ENCODE measurements at regions of chr19 and their contacts with region 1.

Region 1: GRCh38 chr19:796692-797527 is at the start of gene PTBP1:
- DNase-seq: peak; percentile 100
- H3K4me3 Mint-ChIP-seq: peak within 1 kb of the TSS; percentile 91
- H3K27ac Mint-ChIP-seq: peak within 1 kb of the TSS; percentile 90
- H3K4me1 Mint-ChIP-seq: peaks cover 25% of the 10 kb centered on the region
- H3K27me3 Mint-ChIP-seq: no peaks in the 10 kb centered on the region
- CTCF ChIP-seq: no peak
- total RNA-seq, gene PTBP1: 348 and 431 TPM in 2 replicates

Region 2: DNA sequence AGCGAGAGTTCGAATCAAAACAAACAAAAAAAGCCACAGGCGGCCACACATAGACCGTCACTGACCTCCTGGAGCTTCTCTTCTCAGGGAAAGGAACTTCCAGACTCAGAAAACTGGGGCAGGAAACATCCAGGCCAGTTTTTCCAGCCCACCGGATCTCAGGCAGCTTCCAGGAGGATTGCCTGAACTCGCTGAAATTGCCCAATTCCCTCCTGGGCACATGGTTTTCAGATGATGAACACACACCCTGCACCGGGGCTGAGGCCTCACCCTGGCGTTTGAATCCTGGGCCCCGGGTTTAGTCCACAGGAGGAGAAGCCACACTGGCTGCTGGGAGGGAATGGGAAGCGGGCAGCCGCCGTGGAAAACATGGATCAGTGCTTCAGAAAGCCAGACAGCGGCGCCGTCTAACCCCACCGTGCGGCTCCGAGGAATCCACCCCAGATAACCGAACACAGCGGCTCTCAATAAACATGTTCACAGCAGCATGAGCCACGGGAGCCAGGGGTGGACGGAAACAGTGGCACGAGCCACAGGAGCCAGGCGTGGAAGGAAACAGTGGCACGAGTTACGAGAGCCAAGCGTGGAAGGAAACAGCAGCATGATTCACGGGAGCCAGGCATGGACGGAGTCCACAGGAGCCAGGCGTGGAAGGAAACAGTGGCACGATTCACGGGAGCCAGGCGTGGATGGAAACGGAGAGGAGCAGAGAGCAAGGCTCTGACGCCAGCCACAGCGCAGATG is 17.8 kb before region 1 on chr19:
- CTCF ChIA-PET with region 1: interaction called, 5 read pairs
- POLR2A ChIA-PET with region 1: interaction called, 16 read pairs
- intact Hi-C with region 1: loop called (anchors 1 kb)
- DNase-seq: peak; percentile 99
- H3K4me3 Mint-ChIP-seq: peak overlapping the region; percentile 69
- H3K27ac Mint-ChIP-seq: peak overlapping the region; percentile 96
- H3K4me1 Mint-ChIP-seq: peaks cover 8% of the 10 kb centered on the region
- H3K27me3 Mint-ChIP-seq: no peaks in the 10 kb centered on the region
- CTCF ChIP-seq: no peak